ENCODE measurements at regions of chr3 and their contacts with region 1.

Region 1: DNA sequence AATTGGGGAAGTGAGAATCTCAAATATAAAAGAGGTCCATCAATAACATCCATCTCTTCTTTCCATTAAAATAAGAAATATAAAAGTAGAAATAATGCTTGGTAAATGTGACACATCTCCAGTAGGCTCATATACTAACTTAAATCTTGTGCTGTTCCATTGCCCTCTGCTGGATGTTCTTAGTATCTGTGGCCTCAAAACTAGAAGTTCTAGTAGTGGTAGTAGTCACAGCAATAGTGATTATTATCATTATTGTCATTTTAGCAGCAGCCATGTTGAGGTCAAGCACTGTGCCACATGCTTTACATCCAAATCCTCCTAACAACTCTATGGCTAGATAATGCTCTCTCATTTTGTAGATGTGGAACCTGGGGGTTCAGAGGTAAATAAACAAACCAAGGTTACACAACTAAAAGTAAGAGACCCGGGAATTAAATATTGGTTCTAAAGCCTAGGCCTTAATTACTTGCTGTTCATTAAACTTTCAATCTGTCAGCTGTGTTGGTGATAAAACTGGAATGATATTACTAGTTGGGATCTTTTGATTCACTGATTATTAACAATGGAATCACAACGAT is 20.2 kb upstream of the BTLA start:
- DNase-seq: peak; percentile 53
- H3K4me3 Mint-ChIP-seq: no peak overlapping the region
- H3K27ac Mint-ChIP-seq: peak overlapping the region; percentile 84
- H3K4me1 Mint-ChIP-seq: peaks cover 34% of the 10 kb centered on the region
- H3K27me3 Mint-ChIP-seq: no peaks in the 10 kb centered on the region

Region 2: GRCh38 chr3:112111785-112112402 is 407.6 kb before region 1 on chr3:
- CTCF ChIA-PET with region 1: interaction called, 9 read pairs
- intact Hi-C with region 1: loop called (anchors 1 kb)
- DNase-seq: peak; percentile 79
- H3K4me3 Mint-ChIP-seq: no peak overlapping the region
- H3K27ac Mint-ChIP-seq: no peak overlapping the region
- H3K4me1 Mint-ChIP-seq: peaks cover 17% of the 10 kb centered on the region
- H3K27me3 Mint-ChIP-seq: peaks cover 3% of the 10 kb centered on the region

Region 3: DNA sequence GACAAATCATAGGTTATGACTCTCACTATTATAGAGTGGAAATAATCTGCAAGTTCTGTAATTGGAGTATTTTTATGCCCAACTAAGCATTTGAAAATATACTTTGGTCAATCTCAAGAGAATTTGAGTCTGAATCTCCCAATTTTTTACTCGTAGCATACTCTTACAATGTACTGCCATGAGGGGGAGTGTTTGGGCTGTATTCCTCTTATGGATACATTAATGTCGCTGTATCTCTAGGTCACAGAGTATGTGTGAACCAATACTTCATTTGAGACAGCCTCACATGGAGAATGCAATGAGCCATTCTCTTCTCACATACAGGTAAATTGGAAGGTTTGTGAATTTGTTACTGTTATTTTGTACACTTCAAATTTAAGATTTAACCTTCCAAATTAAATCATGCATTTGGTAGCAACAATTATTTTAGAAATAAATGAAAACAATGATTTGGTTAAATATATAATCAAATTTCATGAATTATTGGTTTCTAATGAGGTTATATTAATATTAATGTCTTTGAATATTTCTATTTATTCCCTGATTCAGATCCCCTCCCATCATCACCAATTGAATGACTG is 192.1 kb before region 1 on chr3:
- CTCF ChIA-PET with region 1: interaction called, 17 read pairs
- intact Hi-C with region 1: loop called (anchors 1 kb)
- DNase-seq: peak; percentile 65
- H3K4me3 Mint-ChIP-seq: no peak overlapping the region
- H3K27ac Mint-ChIP-seq: no peak overlapping the region
- H3K4me1 Mint-ChIP-seq: peaks cover 13% of the 10 kb centered on the region
- H3K27me3 Mint-ChIP-seq: peaks cover 9% of the 10 kb centered on the region

Region 4: GRCh38 chr3:112405845-112406244 is 113.7 kb before region 1 on chr3:
- CTCF ChIA-PET with region 1: interaction called, 3 read pairs
- intact Hi-C with region 1: loop called (anchors 1 kb)
- DNase-seq: peak; percentile 75
- H3K4me3 Mint-ChIP-seq: no peak overlapping the region
- H3K27ac Mint-ChIP-seq: no peak overlapping the region
- H3K4me1 Mint-ChIP-seq: peaks cover 23% of the 10 kb centered on the region
- H3K27me3 Mint-ChIP-seq: no peaks in the 10 kb centered on the region

Region 5: GRCh38 chr3:112460519-112461195 is 58.9 kb before region 1 on chr3:
- CTCF ChIA-PET with region 1: interaction called, 4 read pairs
- intact Hi-C with region 1: loop called (anchors 1 kb)
- DNase-seq: no peak
- H3K4me3 Mint-ChIP-seq: no peak overlapping the region
- H3K27ac Mint-ChIP-seq: peak overlapping the region; percentile 79
- H3K4me1 Mint-ChIP-seq: peaks cover 60% of the 10 kb centered on the region
- H3K27me3 Mint-ChIP-seq: no peaks in the 10 kb centered on the region

Region 6: DNA sequence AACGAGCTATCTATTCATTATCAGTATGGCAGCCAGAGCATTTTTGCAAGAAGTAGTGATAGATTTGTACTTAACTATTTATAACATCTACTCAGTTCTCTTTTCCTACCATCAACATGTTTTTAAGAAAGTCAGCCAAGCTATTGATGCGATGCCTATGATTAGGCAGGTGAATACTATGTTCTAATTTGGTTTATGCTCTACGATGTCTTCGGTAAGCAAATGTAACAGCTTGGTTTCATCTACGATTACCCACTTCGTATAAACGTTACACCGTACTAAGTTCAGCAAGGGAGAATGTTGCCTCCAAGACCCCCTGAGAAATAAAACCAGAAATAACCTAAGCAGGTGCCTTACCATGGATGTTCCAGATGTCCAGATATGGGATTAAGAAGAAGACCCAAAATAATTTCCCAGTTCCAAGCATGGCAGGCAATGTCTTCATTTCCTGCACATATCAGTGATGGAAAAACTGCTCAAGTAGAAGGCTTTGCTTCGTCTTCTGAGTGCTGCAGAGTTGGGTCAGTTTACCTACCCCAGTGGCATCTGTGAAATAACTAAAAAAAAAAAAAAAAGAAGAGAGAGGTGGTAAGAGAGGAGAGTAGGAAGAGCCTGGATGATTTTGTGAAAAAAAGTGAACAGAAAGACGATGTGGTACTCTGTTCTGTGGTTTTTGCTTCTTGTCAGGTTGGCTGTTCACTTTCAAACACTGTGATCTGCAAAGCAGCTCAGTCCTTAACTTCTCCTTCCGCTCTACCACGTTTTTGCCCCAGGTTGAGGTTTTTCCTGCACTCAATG is 20.4 kb before region 1 on chr3 and contains the start of gene BTLA:
- CTCF ChIA-PET with region 1: interaction called, 4 read pairs
- intact Hi-C with region 1: loop called (anchors 1 kb)
- DNase-seq: peak; percentile 71
- H3K4me3 Mint-ChIP-seq: peak within 1 kb of the TSS; percentile 100
- H3K27ac Mint-ChIP-seq: peak within 1 kb of the TSS; percentile 100
- H3K4me1 Mint-ChIP-seq: peaks cover 51% of the 10 kb centered on the region
- H3K27me3 Mint-ChIP-seq: no peaks in the 10 kb centered on the region
- total RNA-seq, gene BTLA: 70.6 to 73.4 TPM

Region 7: GRCh38 chr3:112505907-112506306 is 13.6 kb before region 1 on chr3:
- CTCF ChIA-PET with region 1: interaction called, 4 read pairs
- intact Hi-C with region 1: loop called (anchors 1 kb)
- DNase-seq: no peak
- H3K4me3 Mint-ChIP-seq: no peak overlapping the region
- H3K27ac Mint-ChIP-seq: no peak overlapping the region
- H3K4me1 Mint-ChIP-seq: peaks cover 63% of the 10 kb centered on the region
- H3K27me3 Mint-ChIP-seq: no peaks in the 10 kb centered on the region

Measured in activated naive CD4-positive, alpha-beta T cell treated with anti-CD3 and anti-CD28 coated beads for 36 hours (primary cell).